Transverse colon (tissue), 4 donors: ENCODE measurements at regions of chr17 and their contacts with region 1.

Region 1: GRCh38 chr17:6596941-6597340 is 40.6 kb upstream of the PITPNM3 start:
- DNase-seq: no peak
- H3K4me3 ChIP-seq: no peak overlapping the region
- H3K27ac ChIP-seq: no peak overlapping the region
- H3K4me1 ChIP-seq: peaks cover 10 to 41% (median 23%) of the 10 kb centered on the region in 4 donors
- H3K27me3 ChIP-seq: no peaks in the 10 kb centered on the region
- CTCF ChIP-seq: no peak
- EP300 ChIP-seq: no peak
- POLR2A ChIP-seq: no peak

Region 2: GRCh38 chr17:6580625-6581024 is 16.3 kb before region 1 on chr17:
- in situ Hi-C with region 1: no loop called
- intact Hi-C with region 1: loop called (anchors 1 kb)
- DNase-seq: no peak
- H3K4me3 ChIP-seq: no peak overlapping the region
- H3K27ac ChIP-seq: no peak overlapping the region
- H3K4me1 ChIP-seq: peaks cover 0 to 2% (median 0%) of the 10 kb centered on the region in 4 donors
- H3K27me3 ChIP-seq: no peaks in the 10 kb centered on the region
- CTCF ChIP-seq: no peak
- EP300 ChIP-seq: no peak
- POLR2A ChIP-seq: no peak

Region 3: DNA sequence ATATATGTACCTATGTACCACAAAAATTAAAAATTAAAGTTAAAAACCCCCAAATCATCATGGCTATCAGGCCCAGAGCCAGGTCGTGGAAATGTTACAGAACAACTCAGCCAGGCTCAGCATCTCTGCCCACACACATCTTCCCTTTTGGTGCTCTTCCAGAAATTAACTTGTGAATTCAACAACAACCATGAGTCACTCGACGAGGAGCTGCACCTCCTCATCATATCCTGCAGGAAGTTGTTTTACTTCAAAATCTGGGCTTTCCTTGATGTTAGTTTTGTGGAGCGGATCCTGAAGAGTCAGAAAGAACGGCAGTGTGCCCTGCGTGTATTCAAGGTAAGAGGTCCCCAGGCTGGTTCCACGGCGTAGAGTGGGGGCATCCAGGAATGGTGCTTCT is 189.7 kb after region 1 on chr17:
- in situ Hi-C with region 1: no loop called
- intact Hi-C with region 1: no loop called
- DNase-seq: no peak
- H3K4me3 ChIP-seq: no peak overlapping the region
- H3K27ac ChIP-seq: no peak overlapping the region
- H3K4me1 ChIP-seq: no peaks in the 10 kb centered on the region
- H3K27me3 ChIP-seq: peaks cover 73% of the 10 kb centered on the region
- CTCF ChIP-seq: no peak
- EP300 ChIP-seq: no peak
- POLR2A ChIP-seq: no peak